ENCODE measurements at regions of chr4 and their contacts with region 1.

Region 1: GRCh38 chr4:74311696-74312313 is 3.5 kb downstream of the EPGN start:
- DNase-seq: peak; percentile 27
- ATAC-seq: no peak
- H3K4me3 ChIP-seq: no peak overlapping the region
- H3K27ac ChIP-seq: no peak overlapping the region
- H3K4me1 ChIP-seq: no peaks in the 10 kb centered on the region
- H3K27me3 ChIP-seq: no peaks in the 10 kb centered on the region
- CTCF ChIP-seq: peak; percentile 58; the same call in 1 of the 2 replicates

Region 2: DNA sequence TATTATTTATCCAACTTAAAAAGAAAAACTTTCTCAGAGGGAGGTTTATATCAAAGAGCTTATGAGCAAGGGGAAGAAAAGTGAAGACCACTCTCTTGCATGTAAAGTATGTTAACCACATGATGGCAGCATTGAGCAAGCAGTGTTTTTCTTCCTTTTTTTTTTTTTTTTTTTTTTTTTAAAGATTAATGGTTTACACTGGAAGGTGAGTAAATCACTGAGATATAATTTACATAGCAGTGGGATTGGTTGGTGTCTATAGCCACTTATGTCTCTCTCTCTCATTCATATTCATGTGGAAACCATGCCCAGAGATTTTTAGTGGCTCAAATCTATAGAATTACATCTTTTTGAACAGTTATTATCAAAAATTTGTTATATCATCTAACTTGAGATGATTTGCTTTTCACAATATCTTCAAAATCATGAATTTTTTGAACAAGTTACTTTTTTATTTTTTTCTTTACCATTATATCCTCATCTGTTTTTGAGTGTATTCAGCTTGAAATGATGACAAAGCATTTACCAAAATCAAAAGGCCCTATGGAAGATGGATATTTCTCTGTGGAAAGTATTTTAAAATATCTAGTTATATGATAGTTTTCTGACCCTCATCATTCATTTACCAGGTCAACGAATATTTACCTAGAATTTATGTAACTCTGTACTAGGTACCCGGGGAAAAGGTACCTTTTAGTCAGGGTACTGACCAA is 122.3 kb before region 1 on chr4:
- CTCF ChIA-PET with region 1: no interaction called
- POLR2A ChIA-PET with region 1: no interaction called
- in situ Hi-C with region 1: no loop called
- intact Hi-C with region 1: loop called (anchors 2 kb)
- DNase-seq: peak; percentile 41
- ATAC-seq: no peak
- H3K4me3 ChIP-seq: no peak overlapping the region
- H3K27ac ChIP-seq: no peak overlapping the region
- H3K4me1 ChIP-seq: no peaks in the 10 kb centered on the region
- H3K27me3 ChIP-seq: no peaks in the 10 kb centered on the region
- CTCF ChIP-seq: peak; percentile 70; the same call in 1 of the 2 replicates

Region 3: GRCh38 chr4:74228691-74229640 is 82.8 kb before region 1 on chr4:
- CTCF ChIA-PET with region 1: no interaction called
- POLR2A ChIA-PET with region 1: no interaction called
- in situ Hi-C with region 1: no loop called
- intact Hi-C with region 1: loop called (anchors 2 kb)
- DNase-seq: peak; percentile 18
- ATAC-seq: peak; percentile 80
- H3K4me3 ChIP-seq: no peak overlapping the region
- H3K27ac ChIP-seq: no peak overlapping the region
- H3K4me1 ChIP-seq: no peaks in the 10 kb centered on the region
- H3K27me3 ChIP-seq: no peaks in the 10 kb centered on the region
- CTCF ChIP-seq: peak; percentile 85